Calu3 (cell line): ENCODE measurements at regions of chr19 and their contacts with region 1.

Region 1: GRCh38 chr19:48588670-48589399 is 17.7 kb upstream of the SPACA4 start:
- DNase-seq: peak; percentile 97
- H3K4me3 Mint-ChIP-seq: peak overlapping the region; percentile 70
- H3K27ac Mint-ChIP-seq: peak overlapping the region; percentile 58
- H3K4me1 Mint-ChIP-seq: peaks cover 19% of the 10 kb centered on the region
- H3K27me3 Mint-ChIP-seq: peaks cover 65% of the 10 kb centered on the region
- CTCF ChIP-seq: peak; percentile 97

Region 2: GRCh38 chr19:48321622-48322591 is 266.9 kb before region 1 on chr19:
- CTCF ChIA-PET with region 1: interaction called, 13 read pairs
- intact Hi-C with region 1: loop called (anchors 1 kb)
- DNase-seq: peak; percentile 100
- H3K4me3 Mint-ChIP-seq: peak overlapping the region; percentile 79
- H3K27ac Mint-ChIP-seq: peak overlapping the region; percentile 83
- H3K4me1 Mint-ChIP-seq: peaks cover 59% of the 10 kb centered on the region
- H3K27me3 Mint-ChIP-seq: peaks cover 16% of the 10 kb centered on the region
- CTCF ChIP-seq: no peak

Region 3: DNA sequence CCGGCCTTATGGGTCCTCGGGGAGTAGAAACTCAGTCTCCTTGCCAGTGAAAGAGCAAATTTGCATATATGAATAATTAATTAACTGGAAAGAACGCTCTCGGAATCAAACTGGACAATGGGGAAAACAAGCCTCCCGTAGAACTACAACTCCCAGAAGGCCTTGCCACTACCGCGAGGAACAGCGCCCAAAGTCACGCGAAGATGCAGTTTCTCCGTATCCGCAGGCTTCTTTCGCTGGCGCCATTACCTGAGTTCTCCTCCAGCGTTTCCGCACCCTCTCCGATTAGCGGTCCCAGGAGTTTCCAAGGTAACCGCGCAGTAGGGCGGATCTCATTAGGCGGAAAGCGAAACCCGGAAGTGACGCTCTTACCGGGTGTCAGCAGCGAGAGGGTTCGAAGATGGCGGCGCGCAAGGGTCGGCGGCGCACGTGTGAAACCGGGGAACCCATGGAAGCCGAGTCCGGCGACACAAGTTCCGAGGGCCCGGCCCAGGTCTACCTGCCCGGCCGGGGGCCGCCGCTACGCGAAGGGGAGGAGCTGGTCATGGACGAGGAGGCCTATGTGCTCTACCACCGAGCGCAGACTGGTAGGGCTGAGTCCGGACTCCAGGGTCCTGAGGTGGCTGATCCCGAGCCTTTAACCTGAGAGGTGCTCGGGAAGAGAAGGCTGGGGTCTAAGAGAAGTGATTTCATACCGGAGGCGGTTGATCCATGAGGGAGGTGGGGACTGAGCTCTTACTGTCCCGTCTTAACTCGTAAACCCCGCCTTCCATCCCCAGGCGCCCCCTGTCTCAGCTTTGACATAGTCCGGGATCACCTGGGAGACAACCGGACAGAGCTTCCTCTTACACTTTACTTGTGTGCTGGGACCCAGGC is 143.0 kb before region 1 on chr19 and contains the start of gene GRWD1:
- CTCF ChIA-PET with region 1: interaction called, 7 read pairs
- intact Hi-C with region 1: loop called (anchors 1 kb)
- DNase-seq: peak; percentile 92
- H3K4me3 Mint-ChIP-seq: peak within 1 kb of the TSS; percentile 99
- H3K27ac Mint-ChIP-seq: peak within 1 kb of the TSS; percentile 97
- H3K4me1 Mint-ChIP-seq: peaks cover 16% of the 10 kb centered on the region
- H3K27me3 Mint-ChIP-seq: peaks cover 38% of the 10 kb centered on the region
- CTCF ChIP-seq: peak; percentile 6
- total RNA-seq, gene GRWD1: 75.0 and 76.7 TPM in 2 replicates

Region 4: GRCh38 chr19:48506138-48506733 is 82.6 kb before region 1 on chr19:
- CTCF ChIA-PET with region 1: interaction called, 148 read pairs
- intact Hi-C with region 1: loop called (anchors 1 kb)
- DNase-seq: no peak
- H3K4me3 Mint-ChIP-seq: no peak overlapping the region
- H3K27ac Mint-ChIP-seq: no peak overlapping the region
- H3K4me1 Mint-ChIP-seq: peaks cover 13% of the 10 kb centered on the region
- H3K27me3 Mint-ChIP-seq: peaks cover 34% of the 10 kb centered on the region
- CTCF ChIP-seq: peak; percentile 60

Region 5: DNA sequence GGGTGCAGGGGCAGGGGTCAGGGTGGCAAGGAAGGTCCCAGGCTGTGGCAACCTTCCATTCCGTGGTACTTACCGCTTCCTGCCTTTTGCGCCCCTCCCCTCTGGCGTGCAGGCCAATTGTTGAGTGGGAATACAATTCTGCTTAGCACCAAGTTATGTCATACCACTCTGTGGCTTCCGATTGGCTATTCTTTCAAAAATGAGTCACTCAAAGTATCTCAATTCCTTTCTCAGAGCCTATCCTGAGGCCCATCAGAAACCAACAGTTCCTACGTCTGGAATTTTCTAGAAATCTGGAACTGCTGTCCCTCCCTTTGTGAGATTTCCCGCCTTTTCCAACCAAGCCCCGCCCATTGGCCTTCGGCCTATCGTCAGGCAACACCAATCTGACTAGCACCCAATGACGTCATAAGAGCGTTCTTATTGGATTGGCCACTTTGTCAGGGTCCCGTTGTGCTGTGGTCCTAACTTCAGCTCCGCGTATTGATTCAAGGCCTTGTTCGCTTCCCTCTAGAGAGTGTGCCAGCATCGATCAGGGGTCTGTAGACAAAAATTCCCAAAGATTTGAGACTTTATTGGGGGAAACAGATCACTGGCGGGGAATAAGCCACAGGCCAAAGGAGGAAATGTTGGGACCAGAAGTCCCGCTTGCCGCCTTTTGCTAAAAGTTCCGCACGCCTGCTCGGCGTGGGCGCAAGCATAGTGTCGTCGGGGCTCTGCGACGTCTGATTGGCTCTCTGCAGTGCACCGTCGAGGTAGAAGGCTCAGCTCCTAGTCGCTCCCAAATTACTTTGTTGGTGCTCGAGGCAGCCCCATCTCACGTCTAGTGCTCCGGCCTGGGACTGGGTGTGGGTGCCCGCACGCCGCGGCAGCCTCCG is 72.3 kb after region 1 on chr19:
- CTCF ChIA-PET with region 1: no interaction called
- intact Hi-C with region 1: no loop called
- DNase-seq: peak; percentile 82
- H3K4me3 Mint-ChIP-seq: no peak overlapping the region
- H3K27ac Mint-ChIP-seq: peak overlapping the region; percentile 76
- H3K4me1 Mint-ChIP-seq: peaks cover 17% of the 10 kb centered on the region
- H3K27me3 Mint-ChIP-seq: no peaks in the 10 kb centered on the region
- CTCF ChIP-seq: no peak

Region 6: DNA sequence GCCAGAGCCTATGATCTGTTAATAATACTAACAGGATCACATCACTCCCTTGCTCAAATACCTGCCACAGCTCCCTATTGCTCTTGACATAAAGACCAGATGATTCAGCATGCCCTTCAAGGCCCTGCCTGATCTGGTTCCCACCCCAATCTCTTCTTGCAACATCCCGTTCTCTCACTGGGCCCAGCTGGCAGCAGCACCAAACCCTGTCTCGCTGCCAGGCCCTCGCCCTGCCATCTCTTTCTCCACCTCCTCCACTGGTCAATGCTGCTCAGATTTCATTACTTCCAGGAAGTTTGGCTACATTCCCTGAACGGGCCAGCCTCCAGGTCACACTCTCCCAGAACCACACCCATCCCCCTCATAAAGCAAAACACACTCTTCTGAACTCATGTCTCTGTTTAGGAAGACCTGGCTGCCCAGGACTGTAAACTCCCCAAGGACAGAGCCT is 230.6 kb after region 1 on chr19:
- CTCF ChIA-PET with region 1: no interaction called
- intact Hi-C with region 1: no loop called
- DNase-seq: peak; percentile 83
- H3K4me3 Mint-ChIP-seq: peak overlapping the region; percentile 0
- H3K27ac Mint-ChIP-seq: peak overlapping the region; percentile 46
- H3K4me1 Mint-ChIP-seq: peaks cover 11% of the 10 kb centered on the region
- H3K27me3 Mint-ChIP-seq: no peaks in the 10 kb centered on the region
- CTCF ChIP-seq: no peak